IMR-90 (cell line): ENCODE measurements at regions of chr1 and their contacts with region 1.

Region 1: DNA sequence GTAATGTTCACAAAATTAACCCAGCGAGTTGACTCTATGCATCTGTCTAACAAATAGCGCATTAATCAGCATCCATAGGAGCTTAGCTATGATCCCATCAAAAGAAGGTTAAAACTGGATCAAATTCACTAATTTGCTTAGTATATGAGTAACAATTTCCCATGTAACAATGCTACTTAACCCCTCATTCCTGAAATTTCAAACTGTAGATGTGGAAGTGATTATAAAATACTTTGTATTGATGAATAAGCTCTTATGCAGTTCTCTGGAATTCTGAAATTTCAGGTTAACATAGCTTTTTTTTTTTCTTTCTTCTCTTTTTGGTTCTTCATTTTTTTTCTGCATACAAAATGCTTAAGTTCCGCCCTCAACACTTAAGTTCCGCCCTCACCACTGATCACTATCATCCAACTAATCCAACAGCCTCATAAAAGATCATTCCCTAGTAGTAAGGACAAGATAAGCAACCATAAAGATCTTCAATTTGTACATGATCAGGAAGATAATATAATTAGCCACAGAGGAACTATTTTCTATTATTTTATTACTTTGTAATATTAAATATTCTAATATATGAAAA is 1272.6 kb downstream of the KCNT2 start:
- DNase-seq: peak; percentile 24
- ATAC-seq: no peak
- H3K4me3 ChIP-seq: no peak overlapping the region
- H3K27ac ChIP-seq: no peak overlapping the region
- H3K4me1 ChIP-seq: no peaks in the 10 kb centered on the region
- H3K27me3 ChIP-seq: no peaks in the 10 kb centered on the region
- CTCF ChIP-seq: no peak
- POLR2A ChIP-seq: no peak
- RAD21 ChIP-seq: no peak

Region 2: DNA sequence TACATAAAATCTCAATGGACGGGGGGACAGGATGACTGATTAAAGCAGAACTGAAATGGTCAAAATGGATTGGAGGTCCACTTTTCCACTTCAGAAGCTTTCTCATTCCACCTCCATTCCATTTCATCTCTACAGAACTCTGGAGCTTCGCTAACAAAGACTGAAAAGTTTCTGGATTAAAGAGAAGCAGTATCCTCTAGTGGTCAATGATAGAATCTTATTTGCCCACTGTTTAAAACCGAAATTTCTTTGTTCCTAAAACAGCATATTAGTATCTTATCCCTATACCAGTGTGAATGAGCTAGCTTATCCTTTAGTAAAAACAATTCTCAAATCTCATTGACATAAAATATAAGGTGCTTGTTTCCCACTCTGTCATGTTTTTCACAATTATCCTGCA is 382.0 kb after region 1 on chr1:
- CTCF ChIA-PET with region 1: interaction called, 10 read pairs
- POLR2A ChIA-PET with region 1: no interaction called
- dilution Hi-C with region 1: no loop called
- in situ Hi-C with region 1: no loop called
- intact Hi-C with region 1: no loop called
- DNase-seq: peak; percentile 61
- ATAC-seq: peak; percentile 90
- H3K4me3 ChIP-seq: no peak overlapping the region
- H3K27ac ChIP-seq: no peak overlapping the region
- H3K4me1 ChIP-seq: 0 out of 2 replicates have a peak, but pooled peaks cover 2% of the 10 kb centered on the region
- H3K27me3 ChIP-seq: no peaks in the 10 kb centered on the region
- CTCF ChIP-seq: peak; percentile 76
- POLR2A ChIP-seq: no peak
- RAD21 ChIP-seq: peak; percentile 79